Mammary epithelial cell (primary cell): ENCODE measurements at regions of chr15 and their contacts with region 1.

Region 1: DNA sequence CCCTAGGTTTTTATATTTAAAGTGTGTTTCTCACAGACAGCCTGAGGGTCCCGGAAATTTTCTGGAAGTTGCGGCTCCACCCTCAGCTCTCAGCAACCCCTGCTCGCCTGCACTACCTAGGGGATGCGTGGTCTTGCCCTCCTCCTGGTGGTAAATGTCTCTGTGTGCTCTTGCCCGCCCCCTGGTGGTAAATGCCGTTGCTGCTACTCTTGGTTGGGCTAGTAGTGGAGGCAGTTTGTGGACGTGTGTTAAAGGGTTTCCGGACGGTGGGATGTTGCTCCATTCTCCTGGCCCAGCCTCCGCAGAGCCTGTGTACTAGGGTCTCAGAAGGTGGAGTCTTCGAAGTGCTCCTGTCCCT is 27.4 kb downstream of the STOML1 start:
- DNase-seq: peak; percentile 64
- H3K4me3 ChIP-seq: no peak overlapping the region
- H3K27ac ChIP-seq: no peak overlapping the region
- H3K4me1 ChIP-seq: peaks cover 24% of the 10 kb centered on the region
- H3K27me3 ChIP-seq: no peaks in the 10 kb centered on the region
- CTCF ChIP-seq: peak; percentile 97

Region 2: GRCh38 chr15:73873889-73874511 is 90.7 kb before region 1 on chr15:
- CTCF ChIA-PET with region 1: interaction called, 4 read pairs
- dilution Hi-C with region 1: no loop called
- in situ Hi-C with region 1: no loop called
- intact Hi-C with region 1: loop called (anchors 1 kb)
- DNase-seq: peak; percentile 25
- H3K4me3 ChIP-seq: no peak overlapping the region
- H3K27ac ChIP-seq: no peak overlapping the region
- H3K4me1 ChIP-seq: no peaks in the 10 kb centered on the region
- H3K27me3 ChIP-seq: peaks cover 3% of the 10 kb centered on the region
- CTCF ChIP-seq: peak; percentile 65 to 66

Region 3: DNA sequence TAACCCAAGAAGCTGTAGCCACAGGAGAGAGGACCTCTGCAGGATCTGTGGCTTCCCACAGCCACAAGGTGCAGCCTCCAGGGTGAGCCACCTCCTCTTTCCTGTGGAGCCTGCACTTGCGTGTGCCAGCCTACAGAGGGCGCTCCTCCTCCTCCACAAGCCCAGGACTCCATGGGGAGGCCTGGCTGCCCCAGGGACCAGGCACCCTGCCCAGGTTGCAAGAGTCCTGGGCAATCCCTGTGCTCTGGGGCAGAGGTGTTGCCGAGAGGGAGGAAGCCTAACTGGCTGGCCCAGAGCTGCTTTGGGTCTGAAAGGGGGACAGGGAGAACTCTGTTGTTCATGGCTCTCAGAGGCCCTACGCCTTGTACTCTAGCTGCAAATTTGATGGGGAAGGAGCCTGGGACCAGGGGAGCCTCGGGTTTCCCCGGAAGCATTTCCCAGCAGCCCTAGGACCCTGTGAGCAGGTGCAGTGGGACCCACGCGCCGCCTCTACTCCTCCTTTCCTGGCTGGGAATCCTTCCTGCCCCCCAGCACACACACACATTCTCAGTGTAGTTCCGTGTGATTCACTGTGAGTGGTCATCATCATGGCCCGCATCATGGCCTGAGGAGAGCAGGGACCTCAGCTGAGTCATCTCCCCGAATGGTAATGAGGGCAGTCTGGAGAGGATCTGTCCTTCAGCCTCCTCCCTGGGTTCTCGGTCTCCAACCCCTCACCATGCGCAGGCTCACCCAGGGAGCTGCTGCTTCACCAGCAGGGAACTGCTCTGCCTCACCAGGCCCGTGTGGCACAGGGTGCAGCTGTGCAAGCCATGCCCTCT is 67.1 kb before region 1 on chr15:
- CTCF ChIA-PET with region 1: no interaction called
- dilution Hi-C with region 1: no loop called
- in situ Hi-C with region 1: no loop called
- intact Hi-C with region 1: loop called (anchors 1 kb)
- DNase-seq: peak; percentile 52
- H3K4me3 ChIP-seq: no peak overlapping the region
- H3K27ac ChIP-seq: no peak overlapping the region
- H3K4me1 ChIP-seq: no peaks in the 10 kb centered on the region
- H3K27me3 ChIP-seq: no peaks in the 10 kb centered on the region
- CTCF ChIP-seq: peak; percentile 92 to 94

Region 4: DNA sequence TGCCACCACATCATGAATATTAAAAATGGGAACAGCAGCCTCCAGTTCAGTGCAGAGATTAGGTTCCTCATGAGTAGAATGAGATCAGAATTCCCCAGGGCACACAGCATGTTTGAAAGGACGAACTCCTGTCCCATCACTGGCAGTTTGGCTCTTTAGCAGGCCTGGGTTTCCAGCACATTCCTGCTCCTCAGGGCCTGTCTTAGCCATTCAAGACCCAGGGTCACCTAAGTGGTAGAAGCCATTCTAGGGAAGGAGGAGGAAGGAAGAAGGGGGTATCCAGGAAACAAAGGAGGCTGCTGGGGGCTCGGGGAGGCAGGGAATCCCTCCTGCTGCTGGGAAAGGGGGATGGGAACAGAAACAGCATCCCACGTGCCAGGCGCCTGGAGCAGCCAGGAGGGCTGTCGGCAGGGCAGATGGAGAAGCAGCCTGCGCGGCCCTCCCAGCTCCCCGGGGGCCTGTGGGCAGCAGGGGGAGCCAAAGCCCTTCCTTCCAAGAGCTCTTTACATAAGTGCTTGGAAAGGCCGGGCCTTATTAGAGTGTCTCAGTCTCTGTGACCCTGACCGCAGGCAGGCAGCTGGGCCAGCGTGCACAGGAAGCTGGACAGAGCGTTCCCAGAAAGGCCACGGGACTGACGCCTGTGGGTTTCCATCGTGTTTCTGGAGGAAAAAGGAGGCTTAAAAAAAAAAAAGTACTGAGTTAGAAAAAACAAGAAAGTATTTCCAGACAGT is 13.7 kb before region 1 on chr15:
- CTCF ChIA-PET with region 1: interaction called, 5 read pairs
- dilution Hi-C with region 1: no loop called
- in situ Hi-C with region 1: no loop called
- intact Hi-C with region 1: loop called (anchors 1 kb)
- DNase-seq: peak; percentile 78
- H3K4me3 ChIP-seq: no peak overlapping the region
- H3K27ac ChIP-seq: peak overlapping the region; percentile 11
- H3K4me1 ChIP-seq: peaks cover 14% of the 10 kb centered on the region
- H3K27me3 ChIP-seq: no peaks in the 10 kb centered on the region
- CTCF ChIP-seq: peak; percentile 65 to 82

Region 5: GRCh38 chr15:74336108-74337002 is 371.6 kb after region 1 on chr15:
- CTCF ChIA-PET with region 1: no interaction called
- dilution Hi-C with region 1: no loop called
- in situ Hi-C with region 1: no loop called
- intact Hi-C with region 1: no loop called
- DNase-seq: no peak
- H3K4me3 ChIP-seq: no peak overlapping the region
- H3K27ac ChIP-seq: no peak overlapping the region
- H3K4me1 ChIP-seq: no peaks in the 10 kb centered on the region
- H3K27me3 ChIP-seq: no peaks in the 10 kb centered on the region
- CTCF ChIP-seq: no peak